GM10248 (cell line): ENCODE measurements at regions of chr13 and their contacts with region 1.

Region 1: GRCh38 chr13:114174529-114174961 is 4.5 kb upstream of the CFAP97D2 start:
- DNase-seq: no peak
- CTCF ChIP-seq: no peak

Region 2: GRCh38 chr13:114140906-114141250 is 33.7 kb before region 1 on chr13:
- CTCF ChIA-PET with region 1: no interaction called
- POLR2A ChIA-PET with region 1: no interaction called
- DNase-seq: no peak
- CTCF ChIP-seq: no peak

Region 3: DNA sequence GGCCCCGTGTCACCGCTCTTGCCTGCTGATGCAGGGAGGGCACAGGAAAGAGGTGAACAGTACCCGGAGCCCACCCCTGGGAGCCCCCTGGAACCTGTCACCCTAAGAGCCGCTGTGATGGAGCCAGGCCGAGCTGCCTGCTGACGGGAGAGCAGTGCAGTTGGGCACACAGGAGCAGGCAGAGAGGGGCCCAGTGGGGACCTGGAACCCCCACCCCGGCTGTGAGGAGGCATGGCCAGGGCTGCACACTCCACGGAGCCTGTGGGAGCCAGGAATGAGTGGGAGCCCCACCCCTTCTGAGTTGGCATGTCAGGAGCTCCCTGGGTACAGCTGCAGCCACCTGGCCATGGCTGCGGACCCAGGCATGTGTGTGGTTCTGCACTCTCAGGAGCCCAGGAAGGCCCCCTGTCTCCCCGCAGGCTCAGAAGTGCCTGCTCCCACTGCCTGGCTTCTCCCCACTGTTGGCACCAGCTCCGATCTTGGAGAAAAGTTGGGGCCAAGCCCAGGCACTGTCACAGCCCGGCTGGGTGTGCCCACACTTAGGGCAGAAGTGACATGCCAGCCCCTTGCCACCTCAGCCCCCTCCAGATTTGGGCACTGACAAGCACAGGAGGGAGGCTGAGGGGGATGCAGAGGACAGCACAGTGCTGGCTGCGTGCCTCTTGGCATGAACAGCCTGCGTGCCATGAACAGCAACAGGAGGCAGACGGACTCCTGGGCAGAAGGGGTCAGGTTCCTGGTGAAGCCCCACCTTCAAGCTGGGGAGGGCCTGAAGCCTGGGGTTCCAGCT is 10.8 kb after region 1 on chr13:
- CTCF ChIA-PET with region 1: interaction called, 14 read pairs
- POLR2A ChIA-PET with region 1: no interaction called
- DNase-seq: no peak
- CTCF ChIP-seq: no peak

Region 4: DNA sequence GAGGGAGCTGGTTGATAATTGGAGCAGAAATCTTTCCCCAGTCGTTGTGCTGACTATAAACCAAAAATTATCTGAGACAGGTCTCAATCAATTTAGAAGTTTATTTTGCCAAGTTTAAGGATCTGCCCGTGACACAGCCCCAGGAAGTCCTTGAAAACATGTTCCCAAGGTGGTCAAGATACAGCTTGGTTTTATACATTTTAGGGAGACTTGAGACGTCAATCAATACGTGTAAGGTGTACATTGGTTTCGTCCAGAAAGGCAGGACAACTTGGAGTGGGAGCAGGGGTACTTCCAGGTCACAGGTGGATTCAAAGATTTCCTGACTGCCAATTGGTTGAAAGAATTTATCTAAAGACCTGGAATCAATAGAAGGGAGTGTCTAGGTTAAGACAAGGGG is 22.1 kb after region 1 on chr13:
- CTCF ChIA-PET with region 1: no interaction called
- POLR2A ChIA-PET with region 1: no interaction called
- DNase-seq: no peak
- CTCF ChIP-seq: no peak